HEK293T (cell line): ENCODE measurements at regions of chr2 and their contacts with region 1.

Region 1: GRCh38 chr2:26922405-26923188 is 47.8 kb upstream of the MAPRE3 start:
- DNase-seq: peak; percentile 86

Region 2: DNA sequence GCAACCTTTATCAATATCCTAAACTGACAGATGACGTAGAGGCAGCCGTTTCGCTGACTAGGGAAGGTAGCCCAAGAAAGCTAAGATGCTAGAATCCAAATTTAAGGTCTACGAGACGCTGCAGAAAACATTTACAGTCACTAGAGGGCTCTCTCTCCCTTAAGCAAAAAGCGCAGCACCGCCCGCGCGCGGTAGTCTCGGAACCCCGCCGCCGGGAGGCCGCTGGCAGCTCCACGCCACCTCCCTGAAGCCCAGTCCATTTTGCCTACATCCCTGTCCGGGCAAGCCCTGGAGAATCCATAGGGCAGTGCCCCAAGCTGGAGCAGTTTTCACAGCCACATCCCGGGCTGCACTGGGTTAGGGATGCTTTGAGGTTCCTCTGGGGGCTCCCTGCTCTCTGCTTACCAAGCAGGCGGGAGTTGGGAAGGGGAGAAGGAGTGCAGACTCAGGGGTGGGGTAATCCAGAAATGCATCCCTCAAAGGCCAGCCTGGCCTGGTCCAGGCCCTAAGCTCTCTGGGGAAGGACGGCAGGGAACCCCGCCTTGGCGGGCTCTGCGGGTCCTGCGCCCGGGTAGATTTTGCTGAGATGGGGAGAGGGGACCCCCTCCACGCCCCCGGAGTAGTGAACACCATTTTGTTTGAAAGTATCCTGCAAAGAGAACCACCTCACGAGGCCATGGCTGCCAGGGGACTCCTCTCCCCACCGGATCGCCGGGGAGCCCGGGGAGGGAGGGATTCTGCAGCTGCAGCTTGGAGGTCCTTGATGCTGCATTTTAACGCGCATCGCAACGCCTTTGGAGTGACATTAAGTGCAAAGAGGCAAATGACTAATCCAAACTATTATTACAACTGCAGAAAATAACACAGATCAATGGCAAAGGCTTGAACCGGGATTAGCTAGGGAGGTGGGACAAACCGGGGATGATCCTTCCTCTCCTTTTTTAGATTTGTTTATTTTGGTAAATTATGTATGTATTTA is 76.0 kb before region 1 on chr2:
- CTCF ChIA-PET with region 1: interaction called, 45 read pairs
- POLR2A ChIA-PET with region 1: interaction called, 13 read pairs
- DNase-seq: peak; percentile 80

Region 3: DNA sequence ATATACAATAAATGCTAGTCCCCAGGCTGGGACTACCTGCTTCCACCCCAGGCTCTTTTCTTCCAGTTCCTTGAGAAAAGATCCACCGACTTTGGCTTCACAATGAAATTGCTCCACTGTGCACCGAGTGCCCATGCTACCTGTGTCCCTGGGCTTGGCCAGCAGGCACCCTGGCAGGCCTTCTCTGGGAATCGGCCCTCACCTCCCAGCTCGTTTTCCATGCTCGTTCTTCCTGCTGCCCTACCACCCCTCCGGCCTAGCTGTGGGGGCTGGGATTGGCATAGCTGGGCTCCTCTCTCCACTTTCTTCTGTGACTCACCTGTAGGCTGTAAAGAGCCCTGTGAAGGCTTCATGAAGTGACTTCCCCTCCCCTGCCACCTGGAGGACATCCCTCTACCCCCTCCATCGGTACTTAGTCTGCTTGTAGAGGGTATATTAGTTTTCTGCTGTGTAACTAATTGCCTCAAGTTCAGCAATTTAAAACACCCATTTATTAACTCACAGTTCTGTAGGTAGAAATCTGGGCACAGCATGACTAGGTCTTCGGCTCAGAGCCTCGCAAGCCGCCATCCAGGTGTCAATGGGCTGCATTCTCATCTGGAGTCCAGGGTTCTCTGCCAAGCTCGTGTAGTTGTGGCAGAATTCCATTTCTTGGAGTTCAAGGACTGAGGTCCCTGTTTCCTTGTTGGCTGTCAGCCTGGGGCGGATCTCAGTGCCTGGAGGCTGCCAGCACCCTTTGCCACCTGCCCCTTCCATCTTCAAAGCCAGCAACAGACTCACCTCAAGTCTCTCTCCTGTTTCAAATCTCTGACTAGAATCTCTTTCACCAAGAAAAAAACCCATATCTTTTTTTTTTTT is 17.0 kb before region 1 on chr2:
- CTCF ChIA-PET with region 1: interaction called, 11 read pairs
- POLR2A ChIA-PET with region 1: no interaction called
- DNase-seq: no peak

Region 4: DNA sequence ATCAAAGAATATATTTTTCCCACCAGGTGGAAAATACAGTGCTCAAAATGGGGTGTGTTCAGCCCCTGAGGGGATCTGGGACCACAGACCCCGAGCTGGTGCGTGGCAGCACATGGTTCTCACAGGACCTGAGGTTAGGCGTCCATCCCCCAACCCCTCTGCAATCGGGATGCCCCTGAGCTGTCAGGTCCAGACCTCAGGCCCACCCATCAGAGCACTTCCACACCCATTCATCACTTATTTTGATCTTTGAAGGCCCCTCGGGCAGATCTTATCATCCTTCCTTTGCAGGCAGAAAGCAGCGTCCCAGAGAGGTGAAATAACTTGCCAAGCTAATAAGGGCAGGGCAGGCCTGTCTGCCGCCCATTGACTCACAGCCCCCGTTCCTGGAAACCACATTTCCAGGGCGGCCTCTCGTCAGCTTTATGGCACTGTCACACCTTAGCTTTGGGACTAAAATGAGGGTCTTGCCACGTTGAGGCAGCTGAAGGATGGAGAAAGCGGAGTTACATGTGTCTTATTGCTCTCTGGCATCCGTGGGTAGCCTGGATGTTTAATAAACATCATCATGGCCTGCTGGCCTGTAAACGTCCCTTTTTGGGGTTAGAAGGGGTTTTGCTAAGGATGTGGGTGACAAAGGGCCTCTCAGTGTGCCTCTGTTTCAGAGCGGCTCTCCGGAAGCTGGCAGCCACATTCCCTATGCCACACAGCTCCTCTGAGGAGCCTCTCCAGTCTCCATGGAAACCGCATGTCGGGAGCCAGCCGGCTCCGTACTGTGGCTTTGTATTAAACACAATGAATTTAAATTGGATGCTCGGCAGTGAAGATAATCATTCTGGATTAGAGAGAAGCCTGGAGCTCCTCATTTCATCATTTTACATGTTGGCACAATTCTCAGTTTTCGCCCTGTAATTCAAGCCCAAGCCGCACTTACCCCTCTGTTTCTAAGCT is 10.4 kb before region 1 on chr2:
- CTCF ChIA-PET with region 1: interaction called, 10 read pairs
- POLR2A ChIA-PET with region 1: no interaction called
- DNase-seq: no peak

Region 5: DNA sequence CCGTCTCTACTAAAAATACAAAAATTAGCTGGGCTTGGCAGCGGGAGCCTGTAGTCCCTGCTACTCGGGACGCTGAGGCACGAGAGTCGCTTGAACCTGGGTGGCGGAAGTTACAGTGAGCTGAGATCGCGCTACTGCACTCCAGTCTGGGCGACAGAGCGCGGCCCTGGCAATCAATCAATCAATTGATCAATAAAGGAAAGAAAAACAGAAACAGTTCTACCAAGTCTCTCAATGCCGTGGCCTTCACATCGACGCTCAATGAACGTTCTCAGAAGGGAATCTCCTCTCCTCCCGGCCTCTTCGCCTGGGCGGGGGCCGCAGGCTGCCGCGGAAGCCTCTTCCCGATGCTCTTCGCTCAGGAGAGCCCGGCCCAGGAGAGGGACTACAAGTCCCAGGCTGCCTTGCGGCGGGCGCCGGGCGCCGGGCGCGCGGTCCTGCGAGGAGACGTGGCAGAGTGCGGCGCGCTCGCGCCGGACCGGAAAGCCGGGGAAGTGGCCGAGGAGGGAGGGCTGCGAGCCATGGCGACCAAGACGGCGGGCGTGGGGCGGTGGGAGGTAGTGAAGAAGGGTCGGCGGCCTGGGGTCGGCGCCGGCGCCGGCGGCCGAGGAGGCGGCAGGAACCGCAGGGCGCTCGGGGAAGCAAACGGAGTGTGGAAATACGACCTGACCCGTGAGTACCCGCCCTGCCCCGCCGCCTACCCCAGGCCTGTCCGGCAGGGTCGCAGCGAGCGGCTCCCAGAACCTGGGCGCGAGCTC is 110.1 kb after region 1 on chr2 and contains the start of gene TMEM214:
- CTCF ChIA-PET with region 1: interaction called, 10 read pairs
- POLR2A ChIA-PET with region 1: no interaction called
- DNase-seq: peak; percentile 93